ENCODE measurements at regions of chr3 and their contacts with region 1.

Region 1: GRCh38 chr3:30628901-30629590 is 22.6 kb downstream of the TGFBR2 start:
- DNase-seq: peak in 8 of 35 experiments; percentile 18 to 70 (median 32)
- ATAC-seq: peak in 1 of 4 experiments; percentile 28
- H3K4me3 ChIP-seq: peak overlapping the region in 1 of 2 donors; percentile 33
- H3K4me3 Mint-ChIP-seq: peak overlapping the region; percentile 41 to 74 (median 50)
- H3K27ac ChIP-seq: peak overlapping the region; percentile 92
- H3K27ac Mint-ChIP-seq: peak overlapping the region; percentile 93 to 98
- H3K4me1 ChIP-seq: peaks cover 63 to 96% of the 10 kb centered on the region in 2 experiments
- H3K4me1 Mint-ChIP-seq: peaks cover 91 to 96% (median 95%) of the 10 kb centered on the region in 3 donors
- H3K27me3 ChIP-seq: no peaks in the 10 kb centered on the region
- H3K27me3 Mint-ChIP-seq: no peaks in the 10 kb centered on the region

Region 2: DNA sequence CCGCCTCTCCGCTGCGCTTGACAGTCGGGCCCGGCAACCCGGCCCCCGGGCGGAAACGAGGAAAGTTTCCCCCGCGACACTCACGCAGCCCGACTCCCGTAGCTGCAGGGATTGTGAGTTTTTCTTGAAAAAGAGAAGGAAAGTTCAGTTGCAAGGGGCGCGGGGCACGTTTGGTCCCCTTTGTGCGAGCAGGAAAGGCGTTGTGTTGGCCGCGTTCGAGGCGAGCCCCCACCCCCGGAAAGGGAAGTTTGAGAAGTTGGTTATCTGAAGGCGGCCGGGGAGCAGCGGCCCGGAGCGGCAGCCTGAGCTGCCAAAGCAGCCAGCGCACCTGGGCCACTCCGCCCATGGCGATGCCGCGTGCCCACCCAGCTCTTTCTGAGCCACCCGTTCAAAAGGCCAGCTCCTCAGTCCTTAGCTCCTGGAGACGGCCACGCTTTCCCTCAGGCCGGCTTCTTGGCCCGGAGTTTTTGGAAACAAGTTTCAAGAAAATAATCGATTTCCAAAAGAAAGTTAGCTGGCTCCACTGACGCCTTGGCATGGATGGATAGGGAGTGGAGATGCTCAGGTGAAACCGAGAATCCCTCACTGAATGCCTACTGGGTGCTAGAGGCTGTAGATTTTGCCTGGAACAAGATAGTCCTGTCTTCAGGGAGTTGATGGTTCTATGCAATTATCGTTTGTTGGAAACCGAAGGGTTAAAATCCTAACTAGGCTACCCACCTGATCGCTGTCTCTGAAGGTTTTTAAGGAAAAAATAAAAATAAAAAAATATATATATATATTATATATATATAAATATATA is 21.8 kb before region 1 on chr3:
- CTCF ChIA-PET with region 1: interaction called, 3 to 10 read pairs
- POLR2A ChIA-PET with region 1: interaction called, 3 to 4 read pairs
- DNase-seq: peak; percentile 52 to 80 (median 66)
- ATAC-seq: peak; percentile 46 to 56 (median 47)
- H3K4me3 ChIP-seq: peak overlapping the region; percentile 90 to 97
- H3K4me3 Mint-ChIP-seq: peak overlapping the region; percentile 96 to 99 (median 97)
- H3K27ac ChIP-seq: peak overlapping the region; percentile 88
- H3K27ac Mint-ChIP-seq: peak overlapping the region; percentile 93 to 99
- H3K4me1 ChIP-seq: peaks cover 37 to 43% of the 10 kb centered on the region in 2 experiments
- H3K4me1 Mint-ChIP-seq: peaks cover 61 to 70% (median 66%) of the 10 kb centered on the region in 3 donors
- H3K27me3 ChIP-seq: no peaks in the 10 kb centered on the region
- H3K27me3 Mint-ChIP-seq: no peaks in the 10 kb centered on the region

Region 3: GRCh38 chr3:30614943-30615342 is 14.1 kb before region 1 on chr3:
- CTCF ChIA-PET with region 1: interaction called in 1 of 2 experiments, 25 read pairs
- POLR2A ChIA-PET with region 1: interaction called, 4 to 9 read pairs
- DNase-seq: no peak
- ATAC-seq: no peak
- H3K4me3 ChIP-seq: no peak overlapping the region
- H3K4me3 Mint-ChIP-seq: peak overlapping the region; percentile 96 to 99 (median 97)
- H3K27ac ChIP-seq: peak overlapping the region; percentile 64
- H3K27ac Mint-ChIP-seq: peak overlapping the region; percentile 91 to 92
- H3K4me1 ChIP-seq: peaks cover 54 to 86% of the 10 kb centered on the region in 2 experiments
- H3K4me1 Mint-ChIP-seq: peaks cover 91 to 100% (median 95%) of the 10 kb centered on the region in 3 donors
- H3K27me3 ChIP-seq: no peaks in the 10 kb centered on the region
- H3K27me3 Mint-ChIP-seq: no peaks in the 10 kb centered on the region

Region 4: GRCh38 chr3:30658328-30659052 is 29.4 kb after region 1 on chr3:
- CTCF ChIA-PET with region 1: interaction called, 3 to 14 read pairs
- POLR2A ChIA-PET with region 1: interaction called, 6 read pairs
- DNase-seq: peak in 31 of 35 experiments; percentile 28 to 79 (median 47)
- ATAC-seq: peak; percentile 58 to 72 (median 68)
- H3K4me3 ChIP-seq: peak overlapping the region in 1 of 2 donors; percentile 3
- H3K4me3 Mint-ChIP-seq: peak overlapping the region; percentile 58 to 76 (median 62)
- H3K27ac ChIP-seq: peak overlapping the region; percentile 97
- H3K27ac Mint-ChIP-seq: peak overlapping the region; percentile 95 to 96
- H3K4me1 ChIP-seq: peaks cover 82 to 100% of the 10 kb centered on the region in 2 experiments
- H3K4me1 Mint-ChIP-seq: peaks cover 97 to 99% (median 97%) of the 10 kb centered on the region in 3 donors
- H3K27me3 ChIP-seq: no peaks in the 10 kb centered on the region
- H3K27me3 Mint-ChIP-seq: no peaks in the 10 kb centered on the region

Region 5: DNA sequence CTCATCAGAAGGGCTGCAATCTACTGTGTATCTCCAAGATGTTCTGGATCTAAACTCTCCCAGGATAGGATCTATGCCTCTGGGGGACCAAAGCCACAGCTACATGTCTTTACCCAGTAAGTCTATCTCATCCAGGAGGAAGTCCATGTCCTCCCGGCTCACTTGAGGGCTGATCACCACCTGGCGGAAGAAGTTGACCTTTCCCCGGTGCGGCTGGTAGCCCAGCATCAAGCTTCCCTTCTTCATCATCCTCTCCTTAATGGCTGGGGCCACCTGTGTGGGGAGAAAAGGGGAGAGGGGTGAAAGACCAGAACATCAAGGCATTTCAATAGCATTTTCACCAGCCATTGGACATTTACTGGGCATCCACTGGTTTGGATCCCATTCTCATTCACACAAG is 99.1 kb after region 1 on chr3:
- CTCF ChIA-PET with region 1: no interaction called
- POLR2A ChIA-PET with region 1: interaction called in 1 of 2 experiments, 12 read pairs
- DNase-seq: no peak
- ATAC-seq: no peak
- H3K4me3 ChIP-seq: no peak overlapping the region
- H3K4me3 Mint-ChIP-seq: no peak overlapping the region
- H3K27ac ChIP-seq: no peak overlapping the region
- H3K27ac Mint-ChIP-seq: no peak overlapping the region
- H3K4me1 ChIP-seq: peaks cover 0 to 34% of the 10 kb centered on the region in 2 experiments
- H3K4me1 Mint-ChIP-seq: peaks cover 26 to 33% (median 26%) of the 10 kb centered on the region in 3 donors
- H3K27me3 ChIP-seq: no peaks in the 10 kb centered on the region
- H3K27me3 Mint-ChIP-seq: no peaks in the 10 kb centered on the region